ENCODE measurements at regions of chr7 and their contacts with region 1.

Region 1: GRCh38 chr7:13742811-13743210 is 246.7 kb downstream of the ETV1 start:
- DNase-seq: peak; percentile 36
- H3K4me3 ChIP-seq: no peak overlapping the region
- H3K27ac ChIP-seq: no peak overlapping the region
- H3K4me1 ChIP-seq: no peaks in the 10 kb centered on the region
- H3K27me3 ChIP-seq: no peaks in the 10 kb centered on the region
- CTCF ChIP-seq: peak; percentile 16 to 56 (median 53)
- POLR2A ChIP-seq: no peak

Region 2: DNA sequence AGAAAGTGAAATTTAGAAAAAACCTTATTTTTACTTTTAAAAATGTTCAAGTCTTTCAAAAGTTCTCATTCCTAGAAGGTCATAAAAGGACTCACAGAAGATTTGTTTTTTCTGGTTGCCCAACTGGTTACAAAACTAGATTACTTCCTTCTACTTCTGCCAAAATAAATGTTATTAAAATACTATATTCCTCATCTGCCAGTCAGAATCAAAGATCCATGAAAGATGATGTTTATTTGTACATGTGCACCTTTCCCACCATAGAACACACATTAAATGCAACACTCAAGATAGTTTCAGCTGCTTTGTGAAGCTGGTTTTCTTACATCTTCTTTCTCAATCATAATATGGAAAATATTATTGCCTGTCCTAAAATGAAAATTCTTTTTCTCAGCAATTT is 218.7 kb before region 1 on chr7:
- intact Hi-C with region 1: loop called (anchors 10 kb)
- DNase-seq: peak; percentile 4
- H3K4me3 ChIP-seq: no peak overlapping the region
- H3K27ac ChIP-seq: no peak overlapping the region
- H3K4me1 ChIP-seq: peaks cover 2% of the 10 kb centered on the region
- H3K27me3 ChIP-seq: no peaks in the 10 kb centered on the region
- CTCF ChIP-seq: no peak
- POLR2A ChIP-seq: no peak

Region 3: DNA sequence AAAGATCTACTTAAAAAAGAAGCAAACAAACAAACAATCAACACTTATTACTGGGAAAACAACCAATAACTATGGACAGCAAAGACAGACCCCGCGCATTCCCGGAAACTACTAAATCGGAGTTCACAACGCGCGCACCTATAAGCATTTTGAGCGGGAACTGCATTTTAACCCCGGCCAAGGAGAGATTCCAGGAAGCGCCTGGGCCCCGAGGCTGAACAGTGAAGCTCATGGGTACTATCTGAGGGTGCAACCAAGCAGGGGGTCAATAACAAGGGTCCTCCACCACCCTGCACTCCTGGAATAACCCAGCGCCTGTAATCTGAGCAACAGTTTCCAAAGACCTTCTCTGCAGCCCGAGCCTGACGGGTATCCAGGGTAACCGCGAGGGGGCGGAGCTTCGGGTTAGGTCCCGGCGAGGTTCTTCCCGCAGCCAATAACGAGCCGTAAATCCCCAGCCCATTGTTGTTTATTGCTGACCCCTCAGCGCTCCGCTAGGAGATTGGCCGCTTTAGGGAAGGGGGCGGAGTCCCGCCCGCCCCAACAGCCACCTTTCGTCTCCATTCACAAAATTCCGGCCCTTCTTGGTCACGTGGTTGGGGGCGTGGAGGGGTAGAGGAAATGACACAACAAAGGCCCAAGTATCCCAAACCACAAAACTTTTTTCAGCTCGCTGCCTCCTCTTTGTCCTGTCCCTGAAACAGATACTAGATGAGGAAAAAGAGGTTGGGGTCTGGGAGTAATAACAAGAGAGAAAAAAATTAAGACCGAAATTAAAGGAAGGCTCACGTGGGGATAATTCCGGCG is 248.4 kb after region 1 on chr7:
- intact Hi-C with region 1: loop called (anchors 5 kb)
- DNase-seq: peak; percentile 92
- H3K4me3 ChIP-seq: peak overlapping the region; percentile 35 to 48
- H3K27ac ChIP-seq: peak overlapping the region; percentile 61 to 77
- H3K4me1 ChIP-seq: no peaks in the 10 kb centered on the region
- H3K27me3 ChIP-seq: no peaks in the 10 kb centered on the region
- CTCF ChIP-seq: peak; percentile 23 to 35 (median 28)
- POLR2A ChIP-seq: peak; percentile 26

Measured in prostate gland (tissue), 2 donors.